ENCODE measurements at regions of chr3 and their contacts with region 1.

Region 1: GRCh38 chr3:133644768-133645167 is 17.0 kb downstream of the TOPBP1 start:
- DNase-seq: no peak
- ATAC-seq: no peak
- H3K4me3 Mint-ChIP-seq: no peak overlapping the region
- H3K27ac Mint-ChIP-seq: no peak overlapping the region
- H3K4me1 Mint-ChIP-seq: no peaks in the 10 kb centered on the region
- H3K27me3 Mint-ChIP-seq: no peaks in the 10 kb centered on the region
- CTCF ChIP-seq: no peak

Region 2: DNA sequence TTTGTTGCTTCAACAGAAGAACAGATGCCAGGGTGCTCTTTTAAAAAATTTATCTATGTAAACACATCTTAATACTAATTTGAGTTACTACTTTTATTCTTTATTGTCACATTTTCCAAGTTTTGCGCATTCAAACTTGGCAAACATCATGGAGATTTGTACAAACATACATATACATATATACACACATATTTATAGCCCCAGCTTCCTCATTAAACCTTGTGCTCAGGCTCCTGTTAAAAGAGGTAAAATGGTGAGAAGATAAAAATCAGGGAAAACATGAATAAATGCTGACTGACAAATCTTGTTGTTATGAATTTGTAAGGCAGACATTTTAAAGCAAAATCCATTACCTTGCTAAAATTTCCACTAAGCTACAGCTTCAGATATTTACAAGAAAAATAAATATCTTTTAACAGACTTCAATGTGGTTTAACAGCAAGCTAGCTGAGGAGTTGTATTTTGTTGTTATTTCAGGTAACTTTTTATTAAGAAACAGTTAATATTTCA is 44.1 kb before region 1 on chr3:
- CTCF ChIA-PET with region 1: no interaction called
- POLR2A ChIA-PET with region 1: no interaction called
- intact Hi-C with region 1: loop called (anchors 5 kb)
- DNase-seq: no peak
- ATAC-seq: no peak
- H3K4me3 Mint-ChIP-seq: no peak overlapping the region
- H3K27ac Mint-ChIP-seq: no peak overlapping the region
- H3K4me1 Mint-ChIP-seq: no peaks in the 10 kb centered on the region
- H3K27me3 Mint-ChIP-seq: no peaks in the 10 kb centered on the region
- CTCF ChIP-seq: no peak

Measured in activated B cell treated with CpG ODN at 0.5 μM for 24 hours (primary cell).